ENCODE measurements at regions of chr12 and their contacts with region 1.

Region 1: DNA sequence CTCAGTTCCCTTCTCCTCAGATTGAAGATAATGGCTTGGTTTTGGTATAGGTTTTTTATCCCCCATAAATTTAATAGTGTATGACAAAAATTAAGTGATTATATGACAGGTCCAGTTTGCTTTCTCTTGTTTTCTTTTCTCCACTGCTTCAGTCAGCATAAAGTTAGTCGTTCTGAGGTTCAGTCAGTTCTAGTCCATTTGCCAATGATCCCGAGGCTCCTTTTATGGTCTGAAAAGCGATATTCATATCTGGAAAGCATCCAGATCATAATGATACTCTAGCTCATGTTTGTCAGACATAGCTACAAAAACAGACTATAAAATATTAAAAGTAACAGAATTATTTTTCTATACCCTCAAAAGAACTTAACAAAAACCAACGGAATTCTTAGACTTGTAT is 67.1 kb upstream of the SLC38A4 start:
- DNase-seq: no peak
- ATAC-seq: no peak
- H3K4me3 ChIP-seq: no peak overlapping the region
- H3K4me3 Mint-ChIP-seq: no peak overlapping the region
- H3K27ac ChIP-seq: no peak overlapping the region
- H3K27ac Mint-ChIP-seq: no peak overlapping the region
- H3K4me1 ChIP-seq: no peaks in the 10 kb centered on the region
- H3K4me1 Mint-ChIP-seq: peaks cover 3% of the 10 kb centered on the region
- H3K27me3 ChIP-seq: peaks cover 0 to 3% of the 10 kb centered on the region in 2 experiments
- H3K27me3 Mint-ChIP-seq: peaks cover 8% of the 10 kb centered on the region
- CTCF ChIP-seq: no peak

Region 2: DNA sequence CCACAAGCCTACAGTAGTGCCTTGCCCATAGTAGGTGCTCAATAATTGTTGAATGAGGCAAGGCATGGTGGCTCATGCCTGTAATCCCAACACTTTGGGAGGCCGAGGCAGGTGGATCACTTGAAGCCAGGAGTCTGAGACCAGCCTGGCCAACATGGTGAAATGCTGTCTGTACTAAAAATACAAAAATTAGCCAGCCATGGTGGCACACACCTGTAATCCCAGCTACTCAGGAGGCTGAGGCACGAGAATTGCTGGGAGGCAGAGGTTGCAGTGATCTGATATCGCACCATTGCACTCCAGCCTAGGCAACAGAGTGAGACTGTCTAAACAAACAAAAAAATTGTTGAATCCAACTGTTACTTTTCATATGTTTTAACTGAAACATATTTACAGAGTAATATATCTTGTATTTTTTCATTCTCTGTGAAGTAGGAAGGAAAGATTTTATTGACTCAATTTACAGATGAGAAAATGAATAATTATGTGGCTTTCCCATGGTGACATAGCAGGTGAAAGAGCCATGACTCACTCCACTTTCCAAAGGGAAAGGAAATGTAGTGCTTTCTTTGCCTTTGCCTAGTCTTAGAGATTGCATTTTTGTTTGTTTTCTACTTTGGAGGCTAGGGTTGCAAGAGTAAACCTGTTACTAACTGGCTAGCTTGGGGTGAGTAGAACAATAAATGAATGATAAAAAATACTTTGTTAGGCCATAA is 28.3 kb after region 1 on chr12:
- CTCF ChIA-PET with region 1: no interaction called
- POLR2A ChIA-PET with region 1: no interaction called
- intact Hi-C with region 1: loop called in 1 of 2 experiments (anchors 1 kb)
- DNase-seq: no peak
- ATAC-seq: no peak
- H3K4me3 ChIP-seq: no peak overlapping the region
- H3K4me3 Mint-ChIP-seq: no peak overlapping the region
- H3K27ac ChIP-seq: no peak overlapping the region
- H3K27ac Mint-ChIP-seq: no peak overlapping the region
- H3K4me1 ChIP-seq: no peaks in the 10 kb centered on the region
- H3K4me1 Mint-ChIP-seq: no peaks in the 10 kb centered on the region
- H3K27me3 ChIP-seq: no peaks in the 10 kb centered on the region
- H3K27me3 Mint-ChIP-seq: peaks cover 11% of the 10 kb centered on the region
- CTCF ChIP-seq: no peak

Measured in CD8-positive, alpha-beta T cell (primary cell).